H1 (cell line): ENCODE measurements at regions of chr16 and their contacts with region 1.

Region 1: GRCh38 chr16:80526425-80527061 is 14.2 kb upstream of the DYNLRB2 start:
- DNase-seq: no peak
- H3K4me3 ChIP-seq: no peak overlapping the region
- H3K27ac ChIP-seq: no peak overlapping the region
- H3K4me1 ChIP-seq: no peaks in the 10 kb centered on the region
- H3K27me3 ChIP-seq: no peaks in the 10 kb centered on the region
- CTCF ChIP-seq: peak in 2 of 3 experiments; percentile 74 to 81; a peak in 3 of 4 replicates
- EP300 ChIP-seq: no peak
- POLR2A ChIP-seq: no peak
- RAD21 ChIP-seq: peak; percentile 83 to 85

Region 2: GRCh38 chr16:80503107-80503506 is 23.4 kb before region 1 on chr16:
- CTCF ChIA-PET with region 1: no interaction called
- POLR2A ChIA-PET with region 1: no interaction called
- DNase-seq: no peak
- H3K4me3 ChIP-seq: no peak overlapping the region
- H3K27ac ChIP-seq: no peak overlapping the region
- H3K4me1 ChIP-seq: no peaks in the 10 kb centered on the region
- H3K27me3 ChIP-seq: no peaks in the 10 kb centered on the region
- CTCF ChIP-seq: no peak
- EP300 ChIP-seq: no peak
- POLR2A ChIP-seq: no peak
- RAD21 ChIP-seq: no peak

Region 3: GRCh38 chr16:80540516-80541272 is 14.2 kb after region 1 on chr16 and contains the start of gene DYNLRB2:
- CTCF ChIA-PET with region 1: interaction called, 15 read pairs
- POLR2A ChIA-PET with region 1: no interaction called
- DNase-seq: peak; percentile 78 to 92
- H3K4me3 ChIP-seq: peak within 1 kb of the TSS; percentile 48 to 76 (median 58)
- H3K27ac ChIP-seq: no peak within 1 kb of the TSS
- H3K4me1 ChIP-seq: peaks cover 0 to 4% (median 1%) of the 10 kb centered on the region in 4 experiments; a peak in 3 of 7 replicates
- H3K27me3 ChIP-seq: peaks cover 5 to 18% (median 11%) of the 10 kb centered on the region in 4 experiments; a peak in 6 of 7 replicates
- CTCF ChIP-seq: no peak
- EP300 ChIP-seq: no peak
- POLR2A ChIP-seq: peak in 1 of 2 experiments; percentile 68; a peak in 2 of 3 replicates
- RAD21 ChIP-seq: no peak
- total RNA-seq, gene DYNLRB2: not detected in 2 replicates

Region 4: GRCh38 chr16:80824718-80825364 is 298.3 kb after region 1 on chr16:
- CTCF ChIA-PET with region 1: interaction called, 15 read pairs
- POLR2A ChIA-PET with region 1: no interaction called
- DNase-seq: no peak
- H3K4me3 ChIP-seq: no peak overlapping the region
- H3K27ac ChIP-seq: no peak overlapping the region
- H3K4me1 ChIP-seq: no peaks in the 10 kb centered on the region
- H3K27me3 ChIP-seq: no peaks in the 10 kb centered on the region
- CTCF ChIP-seq: peak in 2 of 3 experiments; percentile 31 to 64; a peak in 2 of 4 replicates
- EP300 ChIP-seq: no peak
- POLR2A ChIP-seq: no peak
- RAD21 ChIP-seq: peak; percentile 68 to 69

Region 5: GRCh38 chr16:80831039-80831438 is 304.5 kb after region 1 on chr16:
- CTCF ChIA-PET with region 1: interaction called, 15 read pairs
- POLR2A ChIA-PET with region 1: no interaction called
- DNase-seq: no peak
- H3K4me3 ChIP-seq: no peak overlapping the region
- H3K27ac ChIP-seq: no peak overlapping the region
- H3K4me1 ChIP-seq: no peaks in the 10 kb centered on the region
- H3K27me3 ChIP-seq: no peaks in the 10 kb centered on the region
- CTCF ChIP-seq: no peak
- EP300 ChIP-seq: no peak
- POLR2A ChIP-seq: no peak
- RAD21 ChIP-seq: no peak